MCF 10A (cell line): ENCODE measurements at regions of chr11 and their contacts with region 1.

Region 1: GRCh38 chr11:114400217-114400914 is at the starts of genes C11orf71 and RBM7:
- DNase-seq: peak; percentile 99
- H3K4me3 Mint-ChIP-seq: peak within 1 kb of the TSS; percentile 92
- H3K27ac Mint-ChIP-seq: peak within 1 kb of the TSS; percentile 100
- H3K4me1 Mint-ChIP-seq: peaks cover 39% of the 10 kb centered on the region
- H3K27me3 Mint-ChIP-seq: no peaks in the 10 kb centered on the region
- CTCF ChIP-seq: no peak
- total RNA-seq, gene C11orf71: 3.9 and 5.6 TPM in 2 replicates
- total RNA-seq, gene RBM7: 42.7 and 46.4 TPM in 2 replicates

Region 2: DNA sequence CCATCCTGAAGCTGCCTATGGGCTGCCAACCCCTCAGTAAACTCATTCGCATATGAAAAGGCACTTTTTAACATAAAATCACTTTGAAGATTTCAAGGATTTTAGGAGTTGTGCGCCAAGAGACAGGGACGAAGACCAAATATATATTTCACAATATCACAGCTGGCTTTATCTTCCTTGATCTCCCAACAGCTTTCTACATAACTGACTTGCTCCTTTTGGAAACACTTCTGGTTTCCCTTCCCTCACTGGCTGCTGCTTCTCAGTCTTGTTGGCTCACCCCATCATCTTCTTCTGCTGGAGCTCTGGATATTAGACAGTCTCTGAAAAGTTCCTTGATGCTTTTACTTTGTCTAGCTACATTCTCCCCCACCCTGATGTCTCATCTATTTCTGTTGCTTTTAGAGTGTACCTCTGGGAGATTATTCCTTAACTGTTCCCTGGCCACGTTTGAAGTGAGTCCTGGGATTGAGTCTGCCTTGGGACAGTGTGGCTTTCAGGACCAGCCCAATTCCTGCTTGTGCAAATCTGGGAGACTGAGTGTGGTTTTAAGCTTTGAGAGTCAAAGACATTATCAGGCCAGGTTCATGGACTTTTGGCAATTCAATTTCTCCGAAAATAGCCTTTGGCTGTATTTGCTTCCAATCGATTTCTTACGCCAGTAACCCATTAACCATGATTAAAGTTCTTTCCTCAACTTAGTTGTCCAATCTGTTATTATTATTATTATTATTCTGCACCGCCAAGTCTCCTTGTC is 135.1 kb before region 1 on chr11:
- CTCF ChIA-PET with region 1: no interaction called
- POLR2A ChIA-PET with region 1: no interaction called
- intact Hi-C with region 1: no loop called
- DNase-seq: no peak
- H3K4me3 Mint-ChIP-seq: no peak overlapping the region
- H3K27ac Mint-ChIP-seq: no peak overlapping the region
- H3K4me1 Mint-ChIP-seq: peaks cover 2% of the 10 kb centered on the region
- H3K27me3 Mint-ChIP-seq: no peaks in the 10 kb centered on the region
- CTCF ChIP-seq: no peak

Region 3: GRCh38 chr11:114295676-114296604 is 104.4 kb before region 1 on chr11 and contains the start of gene NNMT:
- CTCF ChIA-PET with region 1: interaction called, 3 read pairs
- POLR2A ChIA-PET with region 1: interaction called, 26 read pairs
- intact Hi-C with region 1: loop called (anchors 5 kb)
- DNase-seq: peak; percentile 99
- H3K4me3 Mint-ChIP-seq: peak within 1 kb of the TSS; percentile 78
- H3K27ac Mint-ChIP-seq: peak within 1 kb of the TSS; percentile 98
- H3K4me1 Mint-ChIP-seq: peaks cover 37% of the 10 kb centered on the region
- H3K27me3 Mint-ChIP-seq: no peaks in the 10 kb centered on the region
- CTCF ChIP-seq: no peak
- total RNA-seq, gene NNMT: 429 and 638 TPM in 2 replicates

Region 4: DNA sequence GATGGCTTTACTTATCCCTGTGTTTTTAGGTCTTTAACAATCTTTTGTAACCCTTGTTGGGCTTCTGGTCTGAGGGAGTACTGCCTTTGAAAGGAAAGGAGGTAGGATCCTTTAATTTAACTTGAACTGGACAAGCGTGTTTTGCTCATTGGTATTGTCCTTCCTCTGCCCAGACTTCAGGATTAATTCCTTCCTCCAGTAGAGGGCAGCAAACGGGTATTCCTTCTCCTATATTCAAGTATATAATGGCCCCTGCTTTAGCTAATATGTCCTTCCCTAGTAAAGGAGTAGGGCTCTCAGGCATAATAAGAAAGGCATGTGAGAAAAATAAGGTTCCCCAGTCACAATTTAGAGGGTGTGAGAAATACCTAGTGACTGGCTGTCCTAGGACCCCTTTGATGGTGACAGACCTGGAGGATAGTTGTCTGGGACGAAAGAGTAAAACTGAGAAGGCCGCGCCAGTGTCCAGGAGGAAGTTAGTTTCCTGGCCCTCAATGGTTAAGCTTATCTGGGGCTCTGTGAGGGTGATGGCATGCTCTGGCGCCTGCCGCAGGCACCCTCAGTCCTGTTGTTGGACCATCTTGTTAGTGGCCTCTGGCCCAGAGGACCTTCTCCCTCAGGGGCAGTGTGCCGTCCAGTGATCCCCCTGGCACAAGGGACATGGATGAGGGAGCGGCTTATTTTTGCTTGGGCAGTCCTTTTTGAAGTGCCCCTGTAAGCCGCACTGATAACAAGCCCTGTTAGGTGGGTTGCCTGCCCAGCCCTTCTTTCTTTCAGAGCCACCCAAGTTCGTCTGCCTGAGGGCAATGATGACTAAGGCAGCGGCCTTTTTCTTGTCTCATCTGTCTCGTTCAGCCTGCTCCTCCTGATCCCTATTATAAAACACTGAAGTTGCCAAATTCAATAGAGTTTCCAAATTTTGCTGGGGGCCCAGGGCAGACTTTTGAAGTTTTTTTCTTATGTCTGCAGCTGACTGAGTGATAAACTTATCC is 51.9 kb before region 1 on chr11:
- CTCF ChIA-PET with region 1: interaction called, 7 read pairs
- POLR2A ChIA-PET with region 1: interaction called, 4 read pairs
- intact Hi-C with region 1: loop called (anchors 2 kb)
- DNase-seq: peak; percentile 70
- H3K4me3 Mint-ChIP-seq: no peak overlapping the region
- H3K27ac Mint-ChIP-seq: no peak overlapping the region
- H3K4me1 Mint-ChIP-seq: peaks cover 5% of the 10 kb centered on the region
- H3K27me3 Mint-ChIP-seq: no peaks in the 10 kb centered on the region
- CTCF ChIP-seq: peak; percentile 47

Region 5: DNA sequence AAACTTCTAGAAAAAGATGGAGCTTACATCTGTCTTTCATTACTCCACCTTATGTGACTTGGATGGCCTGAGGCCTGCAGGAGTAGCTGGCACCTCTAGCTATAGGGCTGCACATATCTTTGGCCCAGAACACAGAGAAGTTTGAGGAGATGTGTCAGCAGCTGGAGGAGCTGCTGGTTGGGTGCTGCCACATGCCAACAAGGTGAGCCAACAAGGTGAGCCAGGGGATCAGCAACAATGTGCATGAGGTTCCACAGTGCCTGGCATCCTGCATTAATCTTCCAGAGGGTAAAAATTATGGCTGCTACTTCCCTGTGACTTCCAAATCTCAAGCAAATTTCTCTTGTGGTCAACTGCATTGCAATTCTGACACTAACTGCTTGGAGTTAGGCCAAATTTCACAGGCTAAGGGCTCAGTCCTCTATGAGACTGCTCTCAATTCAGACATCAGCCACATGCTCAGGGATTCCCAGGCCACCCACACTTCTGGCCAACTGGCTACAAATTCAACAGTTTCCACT is 16.1 kb after region 1 on chr11:
- CTCF ChIA-PET with region 1: interaction called, 3 read pairs
- POLR2A ChIA-PET with region 1: interaction called, 15 read pairs
- intact Hi-C with region 1: no loop called
- DNase-seq: peak; percentile 46
- H3K4me3 Mint-ChIP-seq: no peak overlapping the region
- H3K27ac Mint-ChIP-seq: peak overlapping the region; percentile 74
- H3K4me1 Mint-ChIP-seq: peaks cover 14% of the 10 kb centered on the region
- H3K27me3 Mint-ChIP-seq: no peaks in the 10 kb centered on the region
- CTCF ChIP-seq: no peak

Region 6: DNA sequence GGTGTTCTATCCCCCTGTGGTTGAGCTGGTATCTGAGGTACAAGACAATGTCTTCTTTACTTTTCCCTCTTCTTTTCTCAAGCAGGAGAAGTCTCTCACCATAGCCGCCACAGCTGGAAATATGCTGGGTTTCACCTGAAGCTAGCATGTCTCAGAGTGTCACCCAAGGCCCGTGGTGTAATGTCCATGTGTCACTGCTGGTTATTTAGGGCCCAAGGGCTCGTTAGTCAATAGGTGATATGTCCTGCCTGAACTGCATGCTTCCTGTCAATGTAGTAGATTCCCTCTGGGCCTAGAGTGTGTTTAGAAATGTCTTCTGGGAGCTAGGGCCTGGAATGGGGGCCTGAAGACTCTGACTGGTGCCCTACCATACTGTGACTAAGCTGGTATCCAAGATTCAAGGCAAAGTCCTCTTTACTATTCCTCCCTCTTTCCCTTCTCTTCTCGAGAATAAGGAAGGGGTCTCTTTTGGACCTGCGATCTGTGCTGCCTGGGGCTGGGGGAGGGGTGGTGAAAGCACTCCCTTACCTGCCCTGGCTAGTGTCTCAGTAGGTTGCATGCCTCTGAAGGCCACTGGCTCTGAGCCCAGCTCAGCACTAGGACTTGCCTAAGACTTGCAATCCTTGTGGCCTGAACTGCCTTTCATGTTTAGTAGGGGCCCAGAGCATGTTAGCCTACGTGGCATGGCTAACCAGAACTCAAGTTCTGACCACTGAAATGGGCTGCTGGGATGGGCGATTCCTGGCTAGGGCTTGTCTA is 25.7 kb after region 1 on chr11:
- CTCF ChIA-PET with region 1: interaction called, 12 read pairs
- POLR2A ChIA-PET with region 1: interaction called, 5 read pairs
- intact Hi-C with region 1: no loop called
- DNase-seq: peak; percentile 34
- H3K4me3 Mint-ChIP-seq: no peak overlapping the region
- H3K27ac Mint-ChIP-seq: no peak overlapping the region
- H3K4me1 Mint-ChIP-seq: no peaks in the 10 kb centered on the region
- H3K27me3 Mint-ChIP-seq: no peaks in the 10 kb centered on the region
- CTCF ChIP-seq: no peak